Natural killer cell (primary cell): ENCODE measurements at regions of chr9 and their contacts with region 1.

Region 1: GRCh38 chr9:91089405-91090129 is 272.2 kb downstream of the AUH start:
- DNase-seq: peak in 1 of 2 donors; percentile 35
- ATAC-seq: peak; percentile 59 to 85 (median 84)
- H3K4me3 ChIP-seq: no peak overlapping the region
- H3K4me3 Mint-ChIP-seq: no peak overlapping the region
- H3K27ac ChIP-seq: no peak overlapping the region
- H3K27ac Mint-ChIP-seq: no peak overlapping the region
- H3K4me1 ChIP-seq: peaks cover 7% of the 10 kb centered on the region
- H3K4me1 Mint-ChIP-seq: peaks cover 5 to 8% of the 10 kb centered on the region in 2 donors
- H3K27me3 ChIP-seq: no peaks in the 10 kb centered on the region
- H3K27me3 Mint-ChIP-seq: peaks cover 0 to 5% of the 10 kb centered on the region in 2 donors
- CTCF ChIP-seq: peak; percentile 42

Region 2: DNA sequence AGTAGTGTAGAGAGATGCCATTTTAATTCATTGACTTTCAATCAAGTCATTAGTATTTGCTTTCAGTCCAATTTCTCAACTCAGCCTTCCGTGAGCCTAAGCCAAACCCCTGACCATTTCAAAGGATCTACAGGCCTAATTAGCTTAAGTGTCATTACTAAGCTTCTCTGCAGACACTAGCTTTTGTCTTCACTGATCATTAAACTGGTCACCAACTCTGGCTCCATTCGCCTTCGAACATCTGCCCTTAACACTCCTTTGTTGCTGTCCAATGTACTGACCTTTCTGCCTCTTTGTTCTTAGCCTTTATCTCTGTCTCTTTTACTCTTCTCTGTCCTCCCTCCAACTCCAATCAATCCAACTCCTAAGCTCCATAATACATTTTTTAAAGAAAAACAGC is 746.2 kb before region 1 on chr9:
- intact Hi-C with region 1: no loop called
- DNase-seq: no peak
- ATAC-seq: no peak
- H3K4me3 ChIP-seq: no peak overlapping the region
- H3K4me3 Mint-ChIP-seq: no peak overlapping the region
- H3K27ac ChIP-seq: no peak overlapping the region
- H3K27ac Mint-ChIP-seq: no peak overlapping the region
- H3K4me1 ChIP-seq: no peaks in the 10 kb centered on the region
- H3K4me1 Mint-ChIP-seq: no peaks in the 10 kb centered on the region
- H3K27me3 ChIP-seq: no peaks in the 10 kb centered on the region
- H3K27me3 Mint-ChIP-seq: peaks cover 26 to 64% of the 10 kb centered on the region in 2 donors
- CTCF ChIP-seq: no peak

Region 3: GRCh38 chr9:90914868-90915483 is 174.6 kb before region 1 on chr9:
- intact Hi-C with region 1: no loop called
- DNase-seq: peak; percentile 59 to 88
- ATAC-seq: peak; percentile 89 to 99 (median 99)
- H3K4me3 ChIP-seq: no peak overlapping the region
- H3K4me3 Mint-ChIP-seq: no peak overlapping the region
- H3K27ac ChIP-seq: no peak overlapping the region
- H3K27ac Mint-ChIP-seq: no peak overlapping the region
- H3K4me1 ChIP-seq: peaks cover 3% of the 10 kb centered on the region
- H3K4me1 Mint-ChIP-seq: no peaks in the 10 kb centered on the region
- H3K27me3 ChIP-seq: no peaks in the 10 kb centered on the region
- H3K27me3 Mint-ChIP-seq: peaks cover 0 to 3% of the 10 kb centered on the region in 2 donors
- CTCF ChIP-seq: peak; percentile 91

Region 4: GRCh38 chr9:90972057-90972456 is 117.5 kb before region 1 on chr9:
- intact Hi-C with region 1: no loop called
- DNase-seq: no peak
- ATAC-seq: no peak
- H3K4me3 ChIP-seq: no peak overlapping the region
- H3K4me3 Mint-ChIP-seq: no peak overlapping the region
- H3K27ac ChIP-seq: no peak overlapping the region
- H3K27ac Mint-ChIP-seq: no peak overlapping the region
- H3K4me1 ChIP-seq: no peaks in the 10 kb centered on the region
- H3K4me1 Mint-ChIP-seq: peaks cover 0 to 4% of the 10 kb centered on the region in 2 donors
- H3K27me3 ChIP-seq: no peaks in the 10 kb centered on the region
- H3K27me3 Mint-ChIP-seq: peaks cover 0 to 10% of the 10 kb centered on the region in 2 donors
- CTCF ChIP-seq: no peak

Region 5: DNA sequence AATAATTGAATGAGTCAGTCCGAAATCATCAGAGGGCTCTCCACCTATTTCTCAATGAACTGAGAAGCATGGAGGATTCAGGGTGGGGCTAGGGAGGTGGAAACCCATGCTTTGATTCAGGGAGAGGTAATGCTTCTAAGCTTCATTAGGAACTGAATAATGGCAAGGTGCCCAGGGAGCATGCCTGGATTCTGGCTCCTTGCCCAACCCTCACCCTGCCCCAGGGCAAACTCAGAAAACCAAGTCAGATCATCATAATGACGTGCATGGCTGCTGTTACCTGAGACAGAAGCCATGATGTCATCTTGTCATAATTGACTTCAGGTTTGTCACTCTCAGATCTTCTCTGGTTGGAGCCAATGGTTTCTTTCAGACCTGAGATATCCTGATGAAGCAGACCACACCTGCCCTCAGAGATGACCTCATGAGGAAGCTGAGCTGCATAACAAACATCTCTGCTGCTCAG is 88.4 kb before region 1 on chr9:
- intact Hi-C with region 1: no loop called
- DNase-seq: no peak
- ATAC-seq: no peak
- H3K4me3 ChIP-seq: no peak overlapping the region
- H3K4me3 Mint-ChIP-seq: no peak overlapping the region
- H3K27ac ChIP-seq: no peak overlapping the region
- H3K27ac Mint-ChIP-seq: no peak overlapping the region
- H3K4me1 ChIP-seq: no peaks in the 10 kb centered on the region
- H3K4me1 Mint-ChIP-seq: no peaks in the 10 kb centered on the region
- H3K27me3 ChIP-seq: no peaks in the 10 kb centered on the region
- H3K27me3 Mint-ChIP-seq: no peaks in the 10 kb centered on the region
- CTCF ChIP-seq: no peak

Region 6: DNA sequence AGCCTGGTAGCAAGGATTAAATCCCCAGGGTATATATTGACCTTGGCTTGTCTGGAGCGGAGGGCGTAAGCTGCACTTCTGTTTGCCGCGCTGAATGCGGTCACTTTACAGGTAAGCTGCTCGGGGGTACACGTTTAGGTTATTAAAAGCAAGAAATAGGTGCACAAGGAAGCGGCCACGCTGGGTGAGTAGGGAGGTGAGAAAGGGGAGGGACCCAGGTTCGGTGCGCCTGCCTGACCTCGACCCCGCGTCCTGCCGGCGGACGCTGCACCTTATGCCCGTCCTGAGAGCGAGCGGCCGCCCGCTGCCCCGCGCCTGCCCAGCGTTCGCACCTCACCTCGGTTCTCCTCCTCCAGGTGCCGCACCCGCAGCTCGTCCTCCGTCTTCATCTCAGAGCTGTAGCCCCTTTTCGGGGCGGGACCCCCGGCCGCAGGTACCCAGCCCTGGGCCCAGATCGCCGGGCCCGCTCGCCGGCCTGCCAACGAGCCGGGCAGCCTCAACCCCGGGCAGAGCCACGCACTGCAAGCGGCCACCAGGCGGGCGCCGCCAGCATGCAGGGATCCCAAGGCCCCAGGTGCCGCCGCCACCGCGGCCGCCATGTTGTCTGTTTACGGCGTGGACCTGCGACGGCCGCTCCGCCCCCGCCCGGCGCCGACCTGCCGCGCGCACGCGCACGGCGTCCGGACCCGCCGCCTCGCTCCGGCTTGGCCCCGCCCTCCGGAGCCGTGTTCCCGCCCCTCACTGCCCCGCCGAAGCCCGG is 271.9 kb after region 1 on chr9 and contains the start of gene AUH:
- intact Hi-C with region 1: loop called (anchors 10 kb)
- DNase-seq: peak; percentile 87 to 94
- ATAC-seq: peak; percentile 96 to 97 (median 97)
- H3K4me3 ChIP-seq: peak within 1 kb of the TSS; percentile 87
- H3K4me3 Mint-ChIP-seq: peak within 1 kb of the TSS; percentile 93
- H3K27ac ChIP-seq: peak within 1 kb of the TSS; percentile 50
- H3K27ac Mint-ChIP-seq: peak within 1 kb of the TSS; percentile 85 to 87
- H3K4me1 ChIP-seq: peaks cover 14% of the 10 kb centered on the region
- H3K4me1 Mint-ChIP-seq: peaks cover 39 to 48% of the 10 kb centered on the region in 2 donors
- H3K27me3 ChIP-seq: no peaks in the 10 kb centered on the region
- H3K27me3 Mint-ChIP-seq: no peaks in the 10 kb centered on the region
- CTCF ChIP-seq: no peak
- total RNA-seq, gene AUH: 26.7 to 36.6 (median 34.9) TPM

Region 7: GRCh38 chr9:91433180-91433579 is 343.6 kb after region 1 on chr9:
- intact Hi-C with region 1: loop called (anchors 5 kb)
- DNase-seq: peak in 1 of 2 donors; percentile 61
- ATAC-seq: peak; percentile 65 to 79 (median 72)
- H3K4me3 ChIP-seq: no peak overlapping the region
- H3K4me3 Mint-ChIP-seq: no peak overlapping the region
- H3K27ac ChIP-seq: no peak overlapping the region
- H3K27ac Mint-ChIP-seq: no peak overlapping the region
- H3K4me1 ChIP-seq: no peaks in the 10 kb centered on the region
- H3K4me1 Mint-ChIP-seq: no peaks in the 10 kb centered on the region
- H3K27me3 ChIP-seq: no peaks in the 10 kb centered on the region
- H3K27me3 Mint-ChIP-seq: peaks cover 0 to 9% of the 10 kb centered on the region in 2 donors
- CTCF ChIP-seq: peak; percentile 50